BJ (cell line): ENCODE measurements at regions of chr6 and their contacts with region 1.

Region 1: GRCh38 chr6:32838114-32838958 is at the start of gene TAP2:
- DNase-seq: peak; percentile 46
- H3K4me3 ChIP-seq: peak within 1 kb of the TSS; percentile 90
- H3K27me3 ChIP-seq: no peaks in the 10 kb centered on the region
- CTCF ChIP-seq: peak; percentile 96
- polyA plus RNA-seq, gene TAP2: 18.0 and 25.4 TPM in 2 replicates

Region 2: GRCh38 chr6:32825966-32826365 is 12.4 kb before region 1 on chr6:
- CTCF ChIA-PET with region 1: interaction called, 27 read pairs
- POLR2A ChIA-PET with region 1: no interaction called
- DNase-seq: peak; percentile 35
- H3K4me3 ChIP-seq: no peak overlapping the region
- H3K27me3 ChIP-seq: no peaks in the 10 kb centered on the region
- CTCF ChIP-seq: peak; percentile 48

Region 3: DNA sequence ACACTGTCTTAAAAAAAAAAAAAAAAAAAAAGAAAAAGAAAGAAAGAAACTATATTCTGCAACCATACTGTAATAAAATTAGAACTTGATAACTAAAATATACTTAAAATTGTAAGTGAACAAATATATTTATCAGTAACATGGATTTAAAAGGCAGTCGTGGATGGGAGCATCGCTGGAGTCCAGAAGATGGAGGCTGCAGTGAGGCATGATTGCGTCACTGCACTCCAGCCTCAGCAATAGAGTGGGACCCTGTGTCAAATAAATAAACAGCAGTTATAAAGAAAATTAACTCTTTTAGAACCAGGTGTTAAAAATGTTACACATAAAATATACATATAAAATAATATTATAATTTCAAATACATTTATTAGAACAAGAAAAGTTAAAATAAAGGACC is 24.4 kb after region 1 on chr6:
- CTCF ChIA-PET with region 1: interaction called, 110 read pairs
- POLR2A ChIA-PET with region 1: interaction called, 4 read pairs
- DNase-seq: no peak
- H3K4me3 ChIP-seq: no peak overlapping the region
- H3K27me3 ChIP-seq: no peaks in the 10 kb centered on the region
- CTCF ChIP-seq: no peak

Region 4: DNA sequence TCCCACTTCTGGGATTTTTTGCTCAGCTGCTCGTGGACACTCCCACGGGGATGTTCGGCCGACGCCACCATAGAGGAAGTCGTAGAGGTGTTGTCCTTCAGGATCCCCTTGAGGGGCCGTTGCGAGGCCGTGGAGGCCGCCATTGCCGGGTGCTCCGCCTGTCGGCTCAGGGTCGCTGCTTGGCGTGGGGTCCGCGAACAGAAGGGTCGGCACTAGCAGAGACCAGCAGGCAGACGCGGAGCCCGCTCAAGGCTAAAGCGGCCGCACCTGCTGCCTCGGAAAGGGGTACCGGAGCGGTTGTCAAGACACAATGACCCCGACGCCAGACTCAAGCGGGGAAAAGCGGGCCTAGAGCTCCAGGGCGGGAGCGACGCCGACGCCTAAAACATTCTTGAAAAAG is 41.4 kb after region 1 on chr6:
- CTCF ChIA-PET with region 1: interaction called, 12 read pairs
- POLR2A ChIA-PET with region 1: no interaction called
- DNase-seq: no peak
- H3K4me3 ChIP-seq: no peak overlapping the region
- H3K27me3 ChIP-seq: peaks cover 9% of the 10 kb centered on the region
- CTCF ChIP-seq: no peak